A673 (cell line): ENCODE measurements at regions of chr1 and their contacts with region 1.

Region 1: GRCh38 chr1:175124861-175125260 is 57.2 kb downstream of the TNN start:
- DNase-seq: no peak
- H3K4me3 ChIP-seq: no peak overlapping the region
- H3K27ac ChIP-seq: no peak overlapping the region
- H3K4me1 ChIP-seq: peaks cover 9% of the 10 kb centered on the region
- H3K27me3 ChIP-seq: no peaks in the 10 kb centered on the region
- CTCF ChIP-seq: no peak

Region 2: DNA sequence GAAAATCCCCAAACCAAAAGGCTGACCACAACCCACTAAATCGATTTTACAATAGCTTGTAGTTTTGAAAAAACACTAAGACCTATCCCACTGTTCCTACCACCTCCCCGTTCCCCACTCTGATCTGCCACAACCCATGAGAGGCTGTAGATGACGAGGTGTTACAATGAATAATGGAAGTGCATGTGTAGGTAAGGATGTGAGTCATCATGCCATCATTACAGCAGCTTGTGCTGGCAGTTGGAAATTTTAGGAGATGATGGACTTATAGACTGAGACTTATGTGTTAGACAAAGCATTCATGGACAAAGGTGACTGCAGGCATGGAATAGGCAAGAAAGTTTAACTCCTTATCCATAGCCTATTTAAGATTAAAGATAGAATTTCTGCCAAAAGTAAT is 309.8 kb before region 1 on chr1:
- CTCF ChIA-PET with region 1: no interaction called
- POLR2A ChIA-PET with region 1: interaction called, 12 read pairs
- intact Hi-C with region 1: no loop called
- DNase-seq: no peak
- H3K4me3 ChIP-seq: no peak overlapping the region
- H3K27ac ChIP-seq: no peak overlapping the region
- H3K4me1 ChIP-seq: peaks cover 4% of the 10 kb centered on the region
- H3K27me3 ChIP-seq: no peaks in the 10 kb centered on the region
- CTCF ChIP-seq: no peak

Region 3: DNA sequence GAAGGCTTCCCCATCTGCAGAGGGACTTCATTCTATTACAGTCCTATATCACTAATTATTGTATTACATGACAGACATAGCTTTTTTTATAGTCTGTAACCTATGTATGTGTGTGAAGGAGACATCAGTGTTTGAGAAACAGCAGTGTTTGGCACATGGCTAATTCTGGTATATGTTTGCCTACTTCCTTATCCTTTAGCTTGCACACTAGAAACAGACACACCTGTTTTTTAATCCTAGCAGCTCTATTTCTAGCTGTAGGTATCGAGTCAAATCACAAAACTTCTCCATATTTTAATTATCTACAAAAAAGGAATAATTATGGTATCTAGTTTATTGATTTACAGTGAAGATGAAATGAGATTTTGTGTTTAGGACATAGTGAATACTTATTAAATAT is 254.5 kb before region 1 on chr1:
- CTCF ChIA-PET with region 1: no interaction called
- POLR2A ChIA-PET with region 1: no interaction called
- intact Hi-C with region 1: no loop called
- DNase-seq: no peak
- H3K4me3 ChIP-seq: no peak overlapping the region
- H3K27ac ChIP-seq: no peak overlapping the region
- H3K4me1 ChIP-seq: no peaks in the 10 kb centered on the region
- H3K27me3 ChIP-seq: no peaks in the 10 kb centered on the region
- CTCF ChIP-seq: no peak

Region 4: GRCh38 chr1:175023043-175023921 is 101.6 kb before region 1 on chr1 and contains the start of gene MRPS14:
- CTCF ChIA-PET with region 1: interaction called, 40 read pairs
- POLR2A ChIA-PET with region 1: no interaction called
- intact Hi-C with region 1: no loop called
- DNase-seq: peak; percentile 97
- H3K4me3 ChIP-seq: peak within 1 kb of the TSS; percentile 96
- H3K27ac ChIP-seq: peak within 1 kb of the TSS; percentile 85
- H3K4me1 ChIP-seq: no peaks in the 10 kb centered on the region
- H3K27me3 ChIP-seq: no peaks in the 10 kb centered on the region
- CTCF ChIP-seq: no peak
- total RNA-seq, gene MRPS14: 39.6 and 40.1 TPM in 2 replicates

Region 5: GRCh38 chr1:175033953-175034352 is 90.9 kb before region 1 on chr1:
- CTCF ChIA-PET with region 1: interaction called, 40 read pairs
- POLR2A ChIA-PET with region 1: no interaction called
- intact Hi-C with region 1: loop called (anchors 1 kb)
- DNase-seq: no peak
- H3K4me3 ChIP-seq: no peak overlapping the region
- H3K27ac ChIP-seq: no peak overlapping the region
- H3K4me1 ChIP-seq: no peaks in the 10 kb centered on the region
- H3K27me3 ChIP-seq: no peaks in the 10 kb centered on the region
- CTCF ChIP-seq: no peak